ENCODE measurements at regions of chr13 and their contacts with region 1.

Region 1: DNA sequence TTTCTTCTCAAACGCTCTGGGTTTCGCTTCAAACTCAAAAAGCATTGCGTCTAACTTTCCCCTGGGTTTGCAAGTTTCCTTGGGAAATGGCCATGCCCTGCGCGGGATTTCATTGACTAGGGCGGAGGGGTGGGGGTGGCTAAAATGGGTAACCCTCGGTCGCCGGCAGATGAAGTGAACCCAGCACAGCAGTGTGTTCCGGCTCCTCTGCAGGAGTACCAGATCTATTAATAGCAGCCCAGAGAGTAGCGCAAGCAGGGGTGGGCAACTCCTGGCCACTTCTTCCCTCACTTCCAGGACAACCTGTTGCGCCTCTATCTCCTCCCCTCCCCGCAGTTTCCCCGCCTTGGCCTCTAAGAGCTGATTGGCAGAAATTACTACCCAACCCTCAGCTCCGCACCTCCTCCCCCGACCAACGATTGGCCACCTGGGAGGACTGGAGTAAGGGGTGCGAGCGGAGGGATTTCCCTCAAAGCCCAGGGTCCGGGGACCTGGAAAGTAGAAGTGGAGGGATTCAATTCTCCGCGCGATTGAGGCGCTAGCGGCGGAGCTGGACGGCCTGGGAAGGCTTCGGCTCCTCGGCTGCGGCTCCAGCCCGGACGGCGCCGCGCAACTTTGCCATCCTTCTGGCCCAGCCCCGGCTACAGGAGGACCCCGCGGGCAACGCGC is at the start of gene FREM2:
- DNase-seq: peak; percentile 81
- H3K4me3 Mint-ChIP-seq: peak within 1 kb of the TSS; percentile 79
- H3K27ac Mint-ChIP-seq: peak within 1 kb of the TSS; percentile 33
- H3K4me1 Mint-ChIP-seq: peaks cover 8% of the 10 kb centered on the region
- H3K27me3 Mint-ChIP-seq: no peaks in the 10 kb centered on the region
- CTCF ChIP-seq: no peak
- total RNA-seq, gene FREM2: 23.1 and 25.4 TPM in 2 replicates

Region 2: DNA sequence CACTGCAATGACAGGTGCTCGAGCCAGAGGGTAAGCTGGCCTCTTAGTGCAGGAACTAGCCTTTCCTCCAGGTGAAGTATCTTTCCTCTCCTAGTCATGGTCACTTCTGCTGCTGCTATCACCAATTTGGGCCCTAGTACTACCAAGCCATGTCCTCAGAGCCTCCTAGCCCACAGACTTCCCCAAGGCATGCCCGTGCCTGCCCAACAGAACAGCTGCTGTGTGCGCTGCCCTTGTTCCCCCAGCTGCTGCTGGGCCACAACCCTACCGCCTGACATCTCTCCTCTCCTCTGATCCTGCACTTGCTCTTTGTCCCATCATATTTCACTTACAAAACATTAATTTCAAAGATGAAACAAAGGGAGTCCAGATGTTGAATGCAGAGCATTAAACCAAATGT is 168.4 kb before region 1 on chr13:
- CTCF ChIA-PET with region 1: no interaction called
- intact Hi-C with region 1: no loop called
- DNase-seq: no peak
- H3K4me3 Mint-ChIP-seq: no peak overlapping the region
- H3K27ac Mint-ChIP-seq: no peak overlapping the region
- H3K4me1 Mint-ChIP-seq: no peaks in the 10 kb centered on the region
- H3K27me3 Mint-ChIP-seq: no peaks in the 10 kb centered on the region
- CTCF ChIP-seq: no peak

Region 3: DNA sequence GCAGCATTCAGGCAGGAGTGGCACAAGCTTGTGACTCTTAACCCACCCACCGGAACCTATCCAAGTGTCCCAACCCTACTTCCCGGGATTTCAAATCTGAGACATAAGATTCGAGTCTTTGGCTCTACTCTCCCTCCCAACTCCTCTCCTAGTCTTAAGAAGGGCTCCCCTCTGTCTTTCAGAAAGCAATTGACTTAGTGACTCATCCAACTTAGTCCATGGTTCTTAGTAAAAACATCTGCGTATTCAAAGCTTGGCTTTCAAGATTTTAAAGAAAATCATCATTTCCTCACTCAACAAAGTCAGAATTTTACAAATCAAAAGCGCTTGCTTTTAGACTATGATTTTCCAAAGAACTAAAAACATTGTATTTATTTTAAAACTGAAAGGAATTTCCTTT is 79.6 kb before region 1 on chr13:
- CTCF ChIA-PET with region 1: no interaction called
- intact Hi-C with region 1: no loop called
- DNase-seq: no peak
- H3K4me3 Mint-ChIP-seq: no peak overlapping the region
- H3K27ac Mint-ChIP-seq: no peak overlapping the region
- H3K4me1 Mint-ChIP-seq: peaks cover 20% of the 10 kb centered on the region
- H3K27me3 Mint-ChIP-seq: no peaks in the 10 kb centered on the region
- CTCF ChIP-seq: no peak

Region 4: DNA sequence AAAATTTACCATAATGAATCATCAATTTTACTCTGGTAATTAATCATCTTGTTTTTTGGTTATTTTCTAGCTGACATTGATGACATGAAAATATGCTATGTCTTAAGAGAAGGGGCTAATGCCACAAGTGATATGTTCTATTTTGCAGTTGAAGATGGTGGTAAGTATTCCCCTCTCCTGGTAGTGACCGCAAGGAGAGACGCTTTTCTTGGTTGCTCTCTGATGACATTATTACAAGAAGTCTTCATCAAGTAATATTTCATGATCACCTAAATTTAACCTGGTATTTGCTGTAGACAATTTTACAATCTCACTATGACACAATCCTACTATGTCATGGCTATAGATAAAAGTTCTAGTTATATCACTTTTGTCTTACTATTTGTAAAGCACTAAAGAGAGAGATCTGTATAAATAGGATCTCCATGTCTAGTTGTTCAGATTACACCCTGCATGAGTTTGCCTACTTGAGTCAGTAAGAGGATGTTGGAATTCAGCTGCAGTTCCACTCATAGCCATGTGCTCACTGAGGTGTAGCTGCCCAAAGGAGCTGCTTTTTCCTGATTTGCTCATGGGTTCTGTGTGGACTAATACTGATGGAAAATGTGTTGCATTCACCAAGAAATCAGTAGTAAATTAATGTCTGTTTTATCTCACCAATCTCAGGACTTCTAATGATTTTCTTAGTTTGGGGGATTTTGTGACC is 11.1 kb after region 1 on chr13:
- CTCF ChIA-PET with region 1: interaction called, 18 read pairs
- intact Hi-C with region 1: no loop called
- DNase-seq: peak; percentile 12
- H3K4me3 Mint-ChIP-seq: no peak overlapping the region
- H3K27ac Mint-ChIP-seq: no peak overlapping the region
- H3K4me1 Mint-ChIP-seq: peaks cover 28% of the 10 kb centered on the region
- H3K27me3 Mint-ChIP-seq: no peaks in the 10 kb centered on the region
- CTCF ChIP-seq: no peak

Region 5: GRCh38 chr13:38872693-38873092 is 186.0 kb after region 1 on chr13:
- CTCF ChIA-PET with region 1: interaction called, 5 read pairs
- intact Hi-C with region 1: loop called (anchors 1 kb)
- DNase-seq: peak; percentile 57
- H3K4me3 Mint-ChIP-seq: no peak overlapping the region
- H3K27ac Mint-ChIP-seq: no peak overlapping the region
- H3K4me1 Mint-ChIP-seq: no peaks in the 10 kb centered on the region
- H3K27me3 Mint-ChIP-seq: no peaks in the 10 kb centered on the region
- CTCF ChIP-seq: no peak

Region 6: GRCh38 chr13:38914070-38914469 is 227.4 kb after region 1 on chr13:
- CTCF ChIA-PET with region 1: interaction called, 3 read pairs
- intact Hi-C with region 1: loop called (anchors 5 kb)
- DNase-seq: no peak
- H3K4me3 Mint-ChIP-seq: no peak overlapping the region
- H3K27ac Mint-ChIP-seq: no peak overlapping the region
- H3K4me1 Mint-ChIP-seq: peaks cover 9% of the 10 kb centered on the region
- H3K27me3 Mint-ChIP-seq: no peaks in the 10 kb centered on the region
- CTCF ChIP-seq: no peak

Measured in Calu3 (cell line).